Heart left ventricle (tissue), 16 donors: ENCODE measurements at regions of chr4 and their contacts with region 1.

Region 1: GRCh38 chr4:73662709-73663546 is 42.7 kb upstream of the RASSF6 start:
- DNase-seq: no peak
- ATAC-seq: peak in 3 of 4 donors; percentile 51 to 76 (median 61)
- H3K4me3 ChIP-seq: no peak overlapping the region
- H3K27ac ChIP-seq: no peak overlapping the region
- H3K4me1 ChIP-seq: no peaks in the 10 kb centered on the region
- H3K27me3 ChIP-seq: no peaks in the 10 kb centered on the region
- CTCF ChIP-seq: peak; percentile 23 to 63 (median 46)
- POLR2A ChIP-seq: no peak

Region 2: DNA sequence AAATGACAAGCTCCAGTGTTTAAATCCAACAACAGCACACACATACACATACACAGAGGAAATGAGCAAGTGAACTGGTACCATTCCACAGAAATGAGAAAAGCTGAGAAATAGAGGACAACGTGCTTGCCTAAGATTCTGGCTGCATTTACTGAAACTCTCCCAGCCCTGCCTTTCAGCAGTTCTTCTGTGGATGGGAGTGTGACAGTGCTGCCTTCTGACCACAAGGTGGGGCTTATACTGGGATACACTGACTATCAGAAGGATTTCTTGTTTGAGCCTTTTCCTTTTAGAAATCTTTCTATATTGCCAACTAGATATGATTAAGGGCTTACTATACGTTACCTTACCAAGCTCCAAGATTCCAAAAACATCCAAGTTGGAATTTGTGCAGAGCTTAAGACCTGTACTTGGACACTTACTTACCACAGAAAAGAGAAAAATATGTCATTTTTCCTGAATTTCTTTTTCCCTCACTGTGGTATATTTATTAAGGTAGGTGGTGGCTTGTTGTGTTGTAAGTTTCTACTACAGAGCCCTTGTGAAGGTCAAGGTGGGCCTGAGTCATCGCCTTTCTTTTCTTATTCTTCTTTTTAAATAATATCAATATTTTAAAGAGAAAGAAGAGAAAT is 66.7 kb after region 1 on chr4:
- intact Hi-C with region 1: loop called in 2 of 10 experiments (anchors 5 kb)
- DNase-seq: peak in 4 of 5 donors; percentile 46 to 70 (median 62)
- ATAC-seq: peak; percentile 80 to 93 (median 88)
- H3K4me3 ChIP-seq: no peak overlapping the region
- H3K27ac ChIP-seq: peak overlapping the region in 1 of 12 donors; percentile 6
- H3K4me1 ChIP-seq: peaks cover 0 to 67% (median 17%) of the 10 kb centered on the region in 12 donors
- H3K27me3 ChIP-seq: no peaks in the 10 kb centered on the region
- CTCF ChIP-seq: peak; percentile 71 to 90 (median 81)
- POLR2A ChIP-seq: no peak

Region 3: GRCh38 chr4:73869130-73870050 is 206.5 kb after region 1 on chr4 and contains the start of gene CXCL1:
- intact Hi-C with region 1: loop called in 1 of 10 experiments (anchors 10 kb)
- DNase-seq: peak; percentile 23 to 71 (median 59)
- ATAC-seq: peak; percentile 45 to 80 (median 74)
- H3K4me3 ChIP-seq: peak within 1 kb of the TSS; percentile 51 to 80 (median 64)
- H3K27ac ChIP-seq: peak within 1 kb of the TSS in 11 of 12 donors; percentile 32 to 75 (median 59)
- H3K4me1 ChIP-seq: peaks cover 0 to 23% (median 5%) of the 10 kb centered on the region in 12 donors
- H3K27me3 ChIP-seq: peaks cover 0 to 21% (median 0%) of the 10 kb centered on the region in 9 donors
- CTCF ChIP-seq: peak in 1 of 12 donors; percentile 11
- POLR2A ChIP-seq: no peak
- total RNA-seq, gene CXCL1: 0.26 to 14.9 (median 1.5) TPM in 8 of 9 donors, not detected in the other

Region 4: GRCh38 chr4:73917081-73917501 is 254.2 kb after region 1 on chr4:
- intact Hi-C with region 1: loop called in 8 of 10 experiments (anchors 2 to 10 kb)
- DNase-seq: no peak
- ATAC-seq: peak in 2 of 4 donors; percentile 81 to 95
- H3K4me3 ChIP-seq: no peak overlapping the region
- H3K27ac ChIP-seq: peak overlapping the region in 2 of 12 donors; percentile 6 to 21
- H3K4me1 ChIP-seq: no peaks in the 10 kb centered on the region
- H3K27me3 ChIP-seq: no peaks in the 10 kb centered on the region
- CTCF ChIP-seq: no peak
- POLR2A ChIP-seq: no peak

Region 5: DNA sequence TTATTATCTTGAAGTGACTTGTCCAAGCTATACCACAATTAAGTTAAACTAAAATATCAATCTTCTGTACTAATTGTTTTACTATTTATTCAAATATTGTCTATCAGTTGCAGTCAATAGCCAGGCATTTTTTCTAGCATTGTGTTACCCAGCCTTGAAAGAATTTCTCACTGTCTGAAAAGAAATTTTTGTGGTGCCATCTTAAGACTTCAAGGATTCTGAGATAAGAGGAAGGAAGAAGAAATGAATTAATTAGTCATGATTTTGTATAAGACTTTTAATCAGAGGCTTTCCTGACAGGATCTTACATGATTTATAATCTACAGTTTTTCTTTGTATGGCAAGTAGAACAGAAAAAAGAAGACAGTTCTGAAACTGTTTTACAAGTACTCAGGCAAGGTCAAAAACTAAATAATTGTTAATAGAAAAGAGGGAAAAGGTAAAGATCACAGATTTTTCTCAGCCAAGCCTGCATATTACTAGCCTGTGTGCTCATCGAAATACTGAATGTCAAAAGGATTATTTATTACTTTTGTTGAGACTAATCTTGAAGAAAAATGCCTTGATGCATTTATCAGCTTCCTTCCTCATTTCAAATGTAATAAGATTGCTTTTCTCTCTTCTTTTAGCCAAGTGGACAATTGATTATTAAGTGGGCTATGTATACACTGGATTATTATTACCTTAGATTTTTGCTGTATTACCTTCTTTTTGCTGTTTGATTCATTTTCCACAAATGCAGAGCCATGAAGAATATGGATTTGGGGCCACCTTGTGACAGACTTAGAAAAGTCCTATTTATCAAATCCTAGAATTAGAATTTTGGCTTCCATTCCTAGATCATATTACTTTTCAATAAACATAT is 260.1 kb after region 1 on chr4:
- intact Hi-C with region 1: loop called in 9 of 10 experiments (anchors 2 to 10 kb)
- DNase-seq: no peak
- ATAC-seq: no peak
- H3K4me3 ChIP-seq: no peak overlapping the region
- H3K27ac ChIP-seq: no peak overlapping the region
- H3K4me1 ChIP-seq: peaks cover 0 to 6% (median 0%) of the 10 kb centered on the region in 12 donors
- H3K27me3 ChIP-seq: peaks cover 0 to 7% (median 0%) of the 10 kb centered on the region in 9 donors
- CTCF ChIP-seq: peak in 9 of 12 donors; percentile 19 to 54 (median 45)
- POLR2A ChIP-seq: no peak

Region 6: DNA sequence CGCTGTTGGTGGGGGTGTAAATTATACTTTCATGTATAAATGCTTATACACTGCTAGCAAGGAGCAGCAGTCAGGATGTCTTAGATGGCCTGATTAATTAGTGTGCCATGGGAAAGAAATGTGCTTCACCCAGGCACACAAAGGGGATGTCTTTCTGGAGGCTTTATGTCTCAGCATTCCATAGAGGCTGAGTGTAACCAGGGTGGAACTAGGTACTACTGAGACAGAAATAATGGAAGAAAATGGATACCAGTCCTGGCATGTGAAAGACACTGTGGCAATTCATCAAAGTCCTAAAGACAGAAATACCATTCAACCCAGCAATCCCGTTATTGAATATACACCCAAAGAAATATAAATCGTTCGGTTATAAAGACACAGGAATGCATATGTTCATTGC is 266.4 kb after region 1 on chr4:
- intact Hi-C with region 1: loop called in 6 of 10 experiments (anchors 5 to 10 kb)
- DNase-seq: no peak
- ATAC-seq: no peak
- H3K4me3 ChIP-seq: no peak overlapping the region
- H3K27ac ChIP-seq: no peak overlapping the region
- H3K4me1 ChIP-seq: no peaks in the 10 kb centered on the region
- H3K27me3 ChIP-seq: peaks cover 0 to 4% (median 0%) of the 10 kb centered on the region in 9 donors
- CTCF ChIP-seq: no peak
- POLR2A ChIP-seq: no peak